Mammary epithelial cell (primary cell): ENCODE measurements at regions of chr20 and their contacts with region 1.

Region 1: GRCh38 chr20:22795871-22796270 is 211.5 kb upstream of the FOXA2 start:
- DNase-seq: peak; percentile 87
- H3K4me3 ChIP-seq: no peak overlapping the region
- H3K27ac ChIP-seq: peak overlapping the region; percentile 68
- H3K4me1 ChIP-seq: peaks cover 66% of the 10 kb centered on the region
- H3K27me3 ChIP-seq: no peaks in the 10 kb centered on the region
- CTCF ChIP-seq: no peak

Region 2: GRCh38 chr20:21048841-21049273 is 1747.0 kb before region 1 on chr20:
- CTCF ChIA-PET with region 1: no interaction called
- dilution Hi-C with region 1: no loop called
- in situ Hi-C with region 1: no loop called
- intact Hi-C with region 1: no loop called
- DNase-seq: no peak
- H3K4me3 ChIP-seq: no peak overlapping the region
- H3K27ac ChIP-seq: no peak overlapping the region
- H3K4me1 ChIP-seq: no peaks in the 10 kb centered on the region
- H3K27me3 ChIP-seq: no peaks in the 10 kb centered on the region
- CTCF ChIP-seq: peak; percentile 82 to 87

Region 3: DNA sequence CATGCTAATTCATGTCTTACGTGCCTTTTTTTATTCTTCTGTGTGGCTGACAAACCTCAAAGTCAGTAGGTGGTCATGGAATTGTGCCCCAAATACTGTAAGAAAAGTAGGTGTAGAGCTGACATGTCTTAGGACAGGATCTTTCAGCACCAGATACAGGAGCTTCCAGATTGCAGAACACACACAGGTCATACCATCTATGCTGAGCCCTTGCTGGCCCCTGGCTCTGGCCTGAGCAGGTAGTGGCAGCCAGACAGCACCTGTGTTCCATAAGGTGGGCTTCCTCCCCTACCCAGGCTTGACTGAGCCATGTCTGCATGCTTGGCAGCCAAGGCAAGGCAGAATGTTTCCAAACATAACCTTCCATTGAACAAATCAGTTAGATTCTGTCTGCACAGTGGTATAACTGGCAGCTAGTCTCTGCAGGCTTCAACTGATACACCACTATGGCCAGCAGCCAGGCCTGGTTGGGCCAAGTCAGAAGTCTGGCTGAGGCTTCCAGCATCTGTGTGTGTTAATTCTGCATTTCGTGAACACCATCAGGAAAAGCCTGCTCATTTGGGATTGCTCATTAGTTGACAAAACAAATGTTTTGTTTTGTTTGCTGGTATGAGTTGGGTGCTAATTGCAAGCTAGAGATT is 578.0 kb before region 1 on chr20:
- CTCF ChIA-PET with region 1: no interaction called
- dilution Hi-C with region 1: no loop called
- in situ Hi-C with region 1: no loop called
- intact Hi-C with region 1: no loop called
- DNase-seq: no peak
- H3K4me3 ChIP-seq: no peak overlapping the region
- H3K27ac ChIP-seq: no peak overlapping the region
- H3K4me1 ChIP-seq: no peaks in the 10 kb centered on the region
- H3K27me3 ChIP-seq: peaks cover 11% of the 10 kb centered on the region
- CTCF ChIP-seq: no peak

Region 4: DNA sequence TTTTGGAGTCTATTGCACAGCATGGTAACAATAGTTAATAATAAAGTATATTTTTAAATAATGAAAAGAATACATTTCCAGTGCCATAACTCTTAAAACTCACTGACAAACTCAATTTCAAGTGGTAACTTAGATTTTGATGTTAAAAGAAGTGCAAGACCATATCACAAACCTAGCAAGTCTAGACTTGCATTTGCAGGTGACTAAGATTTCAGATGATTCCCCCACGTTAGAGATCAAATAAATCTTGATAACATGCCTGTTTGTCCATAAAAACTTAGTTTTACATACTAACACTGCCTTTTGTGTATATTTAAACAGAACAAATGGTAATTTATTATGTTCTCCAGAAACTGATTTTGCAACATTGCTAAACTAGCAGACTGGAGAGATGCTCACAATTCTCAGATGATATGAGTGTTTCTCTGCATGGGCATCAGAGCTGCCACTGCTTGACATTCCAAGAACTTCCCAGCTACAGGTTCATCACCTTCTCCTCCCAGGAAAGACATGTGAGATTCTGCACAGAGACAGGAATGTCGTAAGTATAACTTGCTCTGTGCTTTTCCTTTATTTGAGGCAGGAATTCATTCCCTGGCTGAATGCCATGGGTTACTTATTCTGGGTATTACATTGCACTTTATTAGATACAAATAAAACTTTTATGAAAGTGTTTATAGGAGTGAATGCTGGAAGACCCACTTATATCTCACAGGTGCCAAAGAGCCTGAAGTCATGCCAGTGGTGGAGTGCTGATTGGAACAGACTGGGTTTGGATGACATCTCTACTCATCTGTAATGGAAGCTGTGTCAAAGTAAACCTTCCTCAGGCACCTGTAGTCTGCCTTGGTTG is 51.3 kb before region 1 on chr20:
- CTCF ChIA-PET with region 1: no interaction called
- dilution Hi-C with region 1: no loop called
- in situ Hi-C with region 1: no loop called
- intact Hi-C with region 1: loop called (anchors 5 kb)
- DNase-seq: peak; percentile 35
- H3K4me3 ChIP-seq: no peak overlapping the region
- H3K27ac ChIP-seq: no peak overlapping the region
- H3K4me1 ChIP-seq: peaks cover 26% of the 10 kb centered on the region
- H3K27me3 ChIP-seq: no peaks in the 10 kb centered on the region
- CTCF ChIP-seq: no peak

Region 5: DNA sequence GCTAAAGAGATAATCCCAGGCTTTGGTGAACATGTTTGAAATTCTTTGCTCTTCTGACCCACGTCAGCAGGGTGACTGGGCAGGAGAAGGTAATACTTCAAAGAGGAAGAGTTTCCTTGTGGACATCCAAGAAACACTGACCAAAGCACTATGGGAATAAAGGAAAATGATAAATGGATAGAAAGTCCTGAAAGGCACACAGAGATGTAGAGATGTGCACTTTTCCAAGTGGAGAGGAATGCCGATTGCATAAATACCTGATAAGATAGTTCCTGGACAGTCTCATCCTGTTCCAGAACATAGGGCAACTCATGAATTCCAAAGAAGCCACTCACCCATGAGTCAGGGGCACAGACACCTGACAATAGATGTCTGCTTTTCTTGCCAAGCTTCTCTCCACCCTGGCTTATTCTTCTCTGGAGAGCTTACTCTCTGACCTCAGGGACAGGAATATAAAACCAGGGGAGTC is 20.2 kb before region 1 on chr20:
- CTCF ChIA-PET with region 1: no interaction called
- dilution Hi-C with region 1: no loop called
- in situ Hi-C with region 1: no loop called
- intact Hi-C with region 1: loop called (anchors 2 kb)
- DNase-seq: peak; percentile 88
- H3K4me3 ChIP-seq: no peak overlapping the region
- H3K27ac ChIP-seq: peak overlapping the region; percentile 80
- H3K4me1 ChIP-seq: peaks cover 38% of the 10 kb centered on the region
- H3K27me3 ChIP-seq: no peaks in the 10 kb centered on the region
- CTCF ChIP-seq: no peak

Region 6: GRCh38 chr20:22825076-22825475 is 29.2 kb after region 1 on chr20:
- CTCF ChIA-PET with region 1: no interaction called
- dilution Hi-C with region 1: loop called (anchors 5 kb)
- in situ Hi-C with region 1: no loop called
- intact Hi-C with region 1: no loop called
- DNase-seq: peak; percentile 49
- H3K4me3 ChIP-seq: no peak overlapping the region
- H3K27ac ChIP-seq: peak overlapping the region; percentile 38
- H3K4me1 ChIP-seq: peaks cover 56% of the 10 kb centered on the region
- H3K27me3 ChIP-seq: no peaks in the 10 kb centered on the region
- CTCF ChIP-seq: no peak

Region 7: DNA sequence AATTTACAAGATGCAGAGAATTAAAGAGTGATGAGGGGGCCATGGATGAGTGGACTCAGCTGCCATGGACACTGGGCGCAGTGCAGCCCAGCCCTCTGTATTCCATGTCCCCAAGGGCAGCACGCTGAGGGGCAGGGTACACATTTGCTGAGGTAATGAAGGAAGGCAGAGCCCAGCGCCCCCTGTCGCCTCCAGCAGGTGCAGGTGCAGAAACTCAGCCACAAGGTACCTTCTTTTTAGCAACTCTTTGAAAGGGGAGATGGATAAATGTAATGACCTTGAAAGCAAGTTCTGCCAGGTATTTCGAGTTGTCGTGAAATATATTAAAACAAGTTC is 283.1 kb after region 1 on chr20:
- CTCF ChIA-PET with region 1: no interaction called
- dilution Hi-C with region 1: no loop called
- in situ Hi-C with region 1: no loop called
- intact Hi-C with region 1: no loop called
- DNase-seq: no peak
- H3K4me3 ChIP-seq: no peak overlapping the region
- H3K27ac ChIP-seq: no peak overlapping the region
- H3K4me1 ChIP-seq: peaks cover 9% of the 10 kb centered on the region
- H3K27me3 ChIP-seq: no peaks in the 10 kb centered on the region
- CTCF ChIP-seq: peak in 1 of 2 donors; percentile 38